Activated CD4-positive, alpha-beta T cell treated with anti-CD3 and anti-CD28 coated beads, Interleukin-2, amount 10 ng/mL, durations not matched to agents 7 days and 5 days (primary cell): ENCODE measurements at regions of chr10 and their contacts with region 1.

Region 1: GRCh38 chr10:89481662-89482061 is 53.7 kb downstream of the SLC16A12 start:
- DNase-seq: no peak
- H3K4me3 Mint-ChIP-seq: no peak overlapping the region
- H3K27ac Mint-ChIP-seq: no peak overlapping the region
- H3K4me1 Mint-ChIP-seq: no peaks in the 10 kb centered on the region
- H3K27me3 Mint-ChIP-seq: peaks cover 27% of the 10 kb centered on the region

Region 2: GRCh38 chr10:89092981-89093380 is 388.7 kb before region 1 on chr10:
- CTCF ChIA-PET with region 1: no interaction called
- POLR2A ChIA-PET with region 1: interaction called, 10 read pairs
- DNase-seq: no peak
- H3K4me3 Mint-ChIP-seq: no peak overlapping the region
- H3K27ac Mint-ChIP-seq: no peak overlapping the region
- H3K4me1 Mint-ChIP-seq: peaks cover 15% of the 10 kb centered on the region
- H3K27me3 Mint-ChIP-seq: peaks cover 2% of the 10 kb centered on the region

Region 3: GRCh38 chr10:89555701-89556445 is 74.2 kb after region 1 on chr10:
- CTCF ChIA-PET with region 1: no interaction called
- POLR2A ChIA-PET with region 1: no interaction called
- DNase-seq: no peak
- H3K4me3 Mint-ChIP-seq: no peak overlapping the region
- H3K27ac Mint-ChIP-seq: no peak overlapping the region
- H3K4me1 Mint-ChIP-seq: no peaks in the 10 kb centered on the region
- H3K27me3 Mint-ChIP-seq: peaks cover 3% of the 10 kb centered on the region